ENCODE measurements at regions of chr2 and their contacts with region 1.

Region 1: DNA sequence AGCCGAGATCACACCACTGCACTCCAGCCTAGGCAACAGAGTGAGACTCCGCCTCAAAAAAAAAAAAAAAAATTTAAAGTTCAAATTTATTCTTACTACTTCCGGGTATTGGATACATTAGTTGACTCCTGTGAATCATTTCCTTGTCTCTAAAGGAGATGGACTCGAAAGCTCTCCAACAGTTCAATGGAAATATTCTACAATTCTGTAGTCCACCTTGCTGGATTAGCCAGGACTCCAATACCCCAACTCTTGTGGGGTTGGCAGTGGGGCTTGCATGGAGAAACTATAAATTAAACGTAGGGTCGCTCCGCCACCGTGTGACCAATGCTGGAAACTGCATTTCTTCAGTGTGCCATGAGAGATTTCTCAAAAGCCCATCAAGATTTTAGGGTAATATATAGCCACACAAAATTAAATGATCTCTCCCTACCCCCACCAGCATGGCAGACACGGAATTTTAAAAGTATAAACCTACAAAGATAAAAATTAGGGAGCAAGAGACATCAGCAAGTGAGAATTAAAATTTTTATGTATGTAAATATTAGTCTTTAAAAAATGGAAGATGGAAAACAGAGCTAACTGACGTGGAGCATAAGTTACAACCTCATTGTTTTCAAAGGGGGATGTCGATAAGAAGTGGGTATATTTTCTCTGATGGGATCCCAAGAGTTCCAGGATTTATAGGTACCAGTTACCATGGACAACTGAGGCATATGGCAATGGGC is 27.8 kb upstream of the GAREM2 start:
- DNase-seq: peak; percentile 78
- ATAC-seq: peak; percentile 73

Region 2: GRCh38 chr2:25808006-25808383 is 337.1 kb before region 1 on chr2:
- intact Hi-C with region 1: no loop called
- DNase-seq: no peak
- ATAC-seq: no peak

Region 3: GRCh38 chr2:25867396-25868003 is 277.6 kb before region 1 on chr2:
- intact Hi-C with region 1: no loop called
- DNase-seq: no peak
- ATAC-seq: no peak

Region 4: DNA sequence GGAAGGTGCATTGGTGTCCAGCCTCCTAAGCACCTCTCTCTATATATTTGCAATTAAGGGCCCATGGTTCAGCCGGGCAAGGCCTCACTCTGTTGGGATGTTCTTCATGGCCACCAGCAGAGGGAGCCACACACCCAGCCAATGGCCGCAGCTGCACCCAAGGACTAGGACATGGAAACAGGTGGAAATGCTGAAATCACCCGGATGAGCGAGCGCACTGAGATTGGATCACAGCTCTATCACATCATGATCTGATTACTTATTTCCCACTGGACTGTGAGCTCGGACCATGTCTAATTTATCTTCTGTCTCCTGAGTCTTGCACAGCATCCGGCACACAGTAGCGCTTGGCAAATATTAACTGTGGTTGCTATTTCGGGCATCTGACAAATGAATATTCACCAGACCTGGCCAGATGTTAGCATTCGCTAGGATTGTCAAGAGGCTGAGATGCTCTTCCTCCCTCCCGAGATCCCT is 194.0 kb before region 1 on chr2:
- intact Hi-C with region 1: loop called (anchors 5 kb)
- DNase-seq: peak; percentile 88
- ATAC-seq: peak; percentile 94

Region 5: GRCh38 chr2:25991965-25992364 is 153.2 kb before region 1 on chr2:
- intact Hi-C with region 1: loop called (anchors 10 kb)
- DNase-seq: no peak
- ATAC-seq: peak; percentile 30